Activated CD8-positive, alpha-beta memory T cell treated with anti-CD3 and anti-CD28 coated beads, Interleukin-2, amount 10 ng/mL, durations not matched to agents 7 days and 5 days (primary cell): ENCODE measurements at regions of chr9 and their contacts with region 1.

Region 1: DNA sequence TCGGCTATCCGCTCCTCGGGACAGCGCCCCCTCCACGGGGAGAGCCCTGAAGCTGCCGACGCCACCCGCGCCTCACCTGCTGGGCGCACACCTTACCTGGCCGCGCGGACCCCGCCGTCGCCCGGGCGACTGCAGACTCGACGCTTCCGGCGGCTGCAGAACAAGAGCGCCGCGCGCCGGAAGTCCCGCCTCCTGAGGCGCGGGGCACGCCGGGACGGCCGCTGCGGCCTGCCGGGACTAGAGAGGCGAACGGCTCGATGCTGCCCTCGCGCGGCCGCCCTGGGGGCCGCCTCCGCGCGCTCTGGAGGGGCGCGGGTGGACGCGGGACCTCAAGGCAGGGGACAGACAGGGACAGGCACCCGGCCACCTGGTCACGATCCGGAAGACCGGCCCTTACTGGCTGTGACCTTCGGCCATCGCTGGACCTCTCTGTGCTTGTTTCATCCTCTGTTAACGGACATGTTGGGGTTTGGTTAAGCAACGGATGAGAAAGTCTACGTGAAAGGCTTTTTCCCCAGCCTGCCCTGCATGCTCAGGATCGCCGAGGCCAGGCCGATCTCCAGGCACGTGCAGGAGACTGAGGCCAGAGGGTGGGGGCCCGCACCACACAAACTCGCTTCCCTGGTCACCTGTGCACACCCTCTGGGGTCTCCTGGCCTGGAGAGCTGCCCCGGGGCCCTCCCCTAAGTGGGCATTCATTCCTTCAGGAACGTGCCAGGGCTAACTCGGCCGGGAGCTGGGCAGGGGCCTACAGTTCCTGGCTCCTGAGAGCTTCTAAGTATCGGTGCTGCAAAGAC is at the start of gene SNAPC4:
- DNase-seq: peak; percentile 89
- ATAC-seq: peak; percentile 73
- H3K4me3 Mint-ChIP-seq: peak within 1 kb of the TSS; percentile 86
- H3K27ac Mint-ChIP-seq: peak within 1 kb of the TSS; percentile 74
- H3K4me1 Mint-ChIP-seq: peaks cover 50% of the 10 kb centered on the region
- H3K27me3 Mint-ChIP-seq: no peaks in the 10 kb centered on the region
- total RNA-seq, gene SNAPC4: 12.4 to 17.0 TPM

Region 2: GRCh38 chr9:136363606-136364370 is 36.4 kb before region 1 on chr9 and contains the start of gene DNLZ:
- CTCF ChIA-PET with region 1: interaction called, 52 read pairs
- DNase-seq: peak; percentile 89
- ATAC-seq: peak; percentile 84
- H3K4me3 Mint-ChIP-seq: peak within 1 kb of the TSS; percentile 77
- H3K27ac Mint-ChIP-seq: peak within 1 kb of the TSS; percentile 90
- H3K4me1 Mint-ChIP-seq: peaks cover 11% of the 10 kb centered on the region
- H3K27me3 Mint-ChIP-seq: no peaks in the 10 kb centered on the region
- total RNA-seq, gene DNLZ: 22.4 to 23.7 TPM

Region 3: DNA sequence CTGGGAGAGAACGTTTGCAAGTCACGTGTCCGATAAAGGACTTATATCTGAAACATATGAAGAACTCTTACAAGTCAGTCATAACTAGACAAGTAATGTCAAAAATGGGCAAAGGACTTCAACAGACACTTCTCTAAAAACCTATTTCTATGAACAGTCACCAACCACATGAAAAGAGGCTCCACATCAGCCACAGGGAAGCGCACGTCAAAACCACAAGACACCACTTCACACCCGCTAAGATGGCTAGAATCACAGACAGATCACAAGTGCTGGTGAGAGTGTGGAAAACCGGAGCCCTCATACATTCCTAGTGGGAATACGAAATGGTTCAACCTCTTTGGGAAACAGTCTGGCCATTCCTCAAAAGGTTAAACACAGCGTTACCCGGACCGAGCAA is 15.2 kb before region 1 on chr9:
- CTCF ChIA-PET with region 1: interaction called, 13 read pairs
- DNase-seq: peak; percentile 82
- ATAC-seq: peak; percentile 77
- H3K4me3 Mint-ChIP-seq: peak overlapping the region; percentile 17
- H3K27ac Mint-ChIP-seq: peak overlapping the region; percentile 84
- H3K4me1 Mint-ChIP-seq: peaks cover 30% of the 10 kb centered on the region
- H3K27me3 Mint-ChIP-seq: no peaks in the 10 kb centered on the region

Region 4: GRCh38 chr9:136410500-136411287 is 10.5 kb after region 1 on chr9 and contains the starts of genes ENTR1 and PMPCA:
- CTCF ChIA-PET with region 1: interaction called, 20 read pairs
- DNase-seq: peak; percentile 95
- ATAC-seq: peak; percentile 90
- H3K4me3 Mint-ChIP-seq: peak within 1 kb of the TSS; percentile 96
- H3K27ac Mint-ChIP-seq: peak within 1 kb of the TSS; percentile 89
- H3K4me1 Mint-ChIP-seq: peaks cover 43% of the 10 kb centered on the region
- H3K27me3 Mint-ChIP-seq: no peaks in the 10 kb centered on the region
- total RNA-seq, gene ENTR1: 47.4 to 54.2 TPM
- total RNA-seq, gene PMPCA: 64.0 to 76.5 TPM